Naive thymus-derived CD4-positive, alpha-beta T cell (primary cell): ENCODE measurements at regions of chr9 and their contacts with region 1.

Region 1: DNA sequence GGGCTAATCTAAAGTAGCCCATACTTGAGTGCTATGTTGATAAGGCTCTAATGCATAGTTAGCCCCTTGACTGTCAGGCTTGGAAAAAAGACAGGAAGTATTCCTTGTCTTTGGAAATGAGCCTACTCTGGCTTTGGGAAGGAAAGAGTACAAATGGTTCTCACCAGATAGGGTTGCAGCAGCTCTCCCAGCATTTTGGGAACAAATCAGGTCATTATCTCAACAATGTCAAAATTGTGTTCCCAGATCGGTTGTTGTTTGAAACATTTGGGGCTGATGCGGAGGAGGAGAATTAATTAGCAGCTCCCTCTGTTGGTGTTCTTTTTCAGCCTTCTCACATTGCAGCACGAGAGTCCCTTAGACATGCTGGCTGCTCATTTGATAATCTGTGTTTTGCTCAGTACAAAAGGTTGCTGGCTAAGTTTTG is 294.7 kb upstream of the DMRT1 start:
- DNase-seq: peak in 4 of 9 donors; percentile 15 to 47 (median 34)
- ATAC-seq: no peak
- H3K4me3 ChIP-seq: no peak overlapping the region
- H3K4me3 Mint-ChIP-seq: peak overlapping the region in 5 of 10 donors; percentile 10 to 48 (median 11)
- H3K27ac ChIP-seq: no peak overlapping the region
- H3K27ac Mint-ChIP-seq: peak overlapping the region in 3 of 9 donors; percentile 46 to 68 (median 56)
- H3K4me1 ChIP-seq: no peaks in the 10 kb centered on the region
- H3K4me1 Mint-ChIP-seq: peaks cover 3 to 16% (median 12%) of the 10 kb centered on the region in 7 donors
- H3K27me3 ChIP-seq: no peaks in the 10 kb centered on the region
- H3K27me3 Mint-ChIP-seq: peaks cover 0 to 8% (median 2%) of the 10 kb centered on the region in 5 donors

Region 2: GRCh38 chr9:469672-470551 is 76.9 kb before region 1 on chr9:
- CTCF ChIA-PET with region 1: no interaction called
- POLR2A ChIA-PET with region 1: interaction called, 3 read pairs
- intact Hi-C with region 1: loop called in 1 of 2 experiments (anchors 1 kb)
- DNase-seq: peak; percentile 82 to 92 (median 89)
- ATAC-seq: peak; percentile 93
- H3K4me3 ChIP-seq: peak overlapping the region; percentile 84
- H3K4me3 Mint-ChIP-seq: peak overlapping the region; percentile 92 to 99 (median 97)
- H3K27ac ChIP-seq: peak overlapping the region; percentile 75
- H3K27ac Mint-ChIP-seq: peak overlapping the region; percentile 88 to 99 (median 94)
- H3K4me1 ChIP-seq: peaks cover 0 to 6% of the 10 kb centered on the region in 2 donors
- H3K4me1 Mint-ChIP-seq: peaks cover 17 to 32% (median 27%) of the 10 kb centered on the region in 7 donors
- H3K27me3 ChIP-seq: no peaks in the 10 kb centered on the region
- H3K27me3 Mint-ChIP-seq: no peaks in the 10 kb centered on the region

Region 3: GRCh38 chr9:503881-504852 is 42.6 kb before region 1 on chr9:
- CTCF ChIA-PET with region 1: interaction called, 6 read pairs
- POLR2A ChIA-PET with region 1: interaction called, 7 read pairs
- intact Hi-C with region 1: loop called in 1 of 2 experiments (anchors 1 kb)
- DNase-seq: peak; percentile 66 to 86 (median 82)
- ATAC-seq: peak; percentile 90
- H3K4me3 ChIP-seq: peak within 1 kb of the TSS; percentile 74
- H3K4me3 Mint-ChIP-seq: peak within 1 kb of the TSS; percentile 81 to 96 (median 90)
- H3K27ac ChIP-seq: peak within 1 kb of the TSS; percentile 56
- H3K27ac Mint-ChIP-seq: peak within 1 kb of the TSS; percentile 59 to 95 (median 88)
- H3K4me1 ChIP-seq: peaks cover 0 to 9% of the 10 kb centered on the region in 2 donors
- H3K4me1 Mint-ChIP-seq: peaks cover 7 to 32% (median 24%) of the 10 kb centered on the region in 7 donors
- H3K27me3 ChIP-seq: peaks cover 0 to 4% of the 10 kb centered on the region in 2 donors
- H3K27me3 Mint-ChIP-seq: peaks cover 0 to 54% (median 13%) of the 10 kb centered on the region in 5 donors